T-cell (primary cell): ENCODE measurements at regions of chr5 and their contacts with region 1.

Region 1: GRCh38 chr5:96997265-96997859 is 61.5 kb downstream of the LNPEP start:
- DNase-seq: peak in 15 of 35 experiments; percentile 4 to 57 (median 15)
- ATAC-seq: peak in 3 of 4 experiments; percentile 53 to 67 (median 63)
- H3K4me3 ChIP-seq: no peak overlapping the region
- H3K4me3 Mint-ChIP-seq: no peak overlapping the region
- H3K27ac ChIP-seq: no peak overlapping the region
- H3K27ac Mint-ChIP-seq: no peak overlapping the region
- H3K4me1 ChIP-seq: no peaks in the 10 kb centered on the region
- H3K4me1 Mint-ChIP-seq: peaks cover 0 to 41% (median 39%) of the 10 kb centered on the region in 3 donors
- H3K27me3 ChIP-seq: no peaks in the 10 kb centered on the region
- H3K27me3 Mint-ChIP-seq: no peaks in the 10 kb centered on the region

Region 2: DNA sequence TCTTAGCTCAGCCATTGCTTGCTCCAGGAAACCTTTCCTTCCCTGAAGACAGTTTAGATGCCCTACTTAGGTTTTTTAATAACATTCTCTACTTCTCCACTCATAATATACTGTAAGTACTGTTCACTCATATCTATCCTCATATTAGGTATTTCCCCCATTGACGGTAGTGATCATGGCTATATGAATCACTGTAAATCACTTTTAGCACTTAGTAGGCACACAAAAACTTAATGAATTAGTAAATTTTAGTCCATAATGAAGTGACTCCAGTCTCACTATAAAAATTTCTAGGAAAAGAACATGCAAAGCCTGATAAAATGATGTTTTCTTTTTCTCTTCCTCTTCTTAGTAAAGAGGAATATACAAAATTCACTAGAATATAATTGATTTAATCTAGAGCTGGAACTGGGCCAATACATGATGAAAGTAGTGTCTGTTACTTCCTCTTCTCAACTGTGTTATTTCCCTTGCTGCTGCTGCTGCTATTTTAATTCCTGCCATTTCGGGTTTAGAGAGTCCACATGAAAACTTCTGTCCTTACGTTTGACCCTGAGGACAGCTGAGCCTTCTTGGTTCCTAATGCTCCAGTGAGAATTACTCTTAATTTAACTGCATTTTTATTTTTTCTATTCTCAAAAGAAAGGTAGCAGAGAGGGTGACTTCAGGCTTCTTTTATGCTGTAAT is 12.0 kb after region 1 on chr5:
- CTCF ChIA-PET with region 1: interaction called, 5 to 13 read pairs
- POLR2A ChIA-PET with region 1: no interaction called
- DNase-seq: peak in 2 of 35 experiments; percentile 0 to 68
- ATAC-seq: peak; percentile 55 to 80 (median 76)
- H3K4me3 ChIP-seq: no peak overlapping the region
- H3K4me3 Mint-ChIP-seq: peak overlapping the region; percentile 7 to 48 (median 31)
- H3K27ac ChIP-seq: peak overlapping the region; percentile 23
- H3K27ac Mint-ChIP-seq: peak overlapping the region; percentile 46 to 90
- H3K4me1 ChIP-seq: peaks cover 5 to 25% of the 10 kb centered on the region in 2 experiments
- H3K4me1 Mint-ChIP-seq: peaks cover 27 to 42% (median 31%) of the 10 kb centered on the region in 3 donors
- H3K27me3 ChIP-seq: no peaks in the 10 kb centered on the region
- H3K27me3 Mint-ChIP-seq: no peaks in the 10 kb centered on the region

Region 3: GRCh38 chr5:97026721-97027120 is 29.4 kb after region 1 on chr5:
- CTCF ChIA-PET with region 1: no interaction called
- POLR2A ChIA-PET with region 1: interaction called in 1 of 2 experiments, 11 read pairs
- DNase-seq: no peak
- ATAC-seq: no peak
- H3K4me3 ChIP-seq: no peak overlapping the region
- H3K4me3 Mint-ChIP-seq: no peak overlapping the region
- H3K27ac ChIP-seq: no peak overlapping the region
- H3K27ac Mint-ChIP-seq: no peak overlapping the region
- H3K4me1 ChIP-seq: peaks cover 5 to 8% of the 10 kb centered on the region in 2 experiments
- H3K4me1 Mint-ChIP-seq: peaks cover 12 to 15% (median 15%) of the 10 kb centered on the region in 3 donors
- H3K27me3 ChIP-seq: no peaks in the 10 kb centered on the region
- H3K27me3 Mint-ChIP-seq: no peaks in the 10 kb centered on the region

Region 4: GRCh38 chr5:97162045-97162444 is 164.7 kb after region 1 on chr5:
- CTCF ChIA-PET with region 1: interaction called, 3 to 10 read pairs
- POLR2A ChIA-PET with region 1: no interaction called
- DNase-seq: peak in 24 of 35 experiments; percentile 5 to 82 (median 36)
- ATAC-seq: peak in 2 of 4 experiments; percentile 36 to 48
- H3K4me3 ChIP-seq: no peak overlapping the region
- H3K4me3 Mint-ChIP-seq: no peak overlapping the region
- H3K27ac ChIP-seq: no peak overlapping the region
- H3K27ac Mint-ChIP-seq: no peak overlapping the region
- H3K4me1 ChIP-seq: peaks cover 0 to 2% of the 10 kb centered on the region in 2 experiments
- H3K4me1 Mint-ChIP-seq: peaks cover 0 to 11% (median 7%) of the 10 kb centered on the region in 3 donors
- H3K27me3 ChIP-seq: no peaks in the 10 kb centered on the region
- H3K27me3 Mint-ChIP-seq: no peaks in the 10 kb centered on the region